ENCODE measurements at regions of chr14 and their contacts with region 1.

Region 1: GRCh38 chr14:36941783-36942521 is 230.5 kb downstream of the SLC25A21 start:
- DNase-seq: peak; percentile 47 to 72
- H3K4me3 ChIP-seq: no peak overlapping the region
- H3K27ac ChIP-seq: no peak overlapping the region
- H3K4me1 ChIP-seq: peaks cover 12% of the 10 kb centered on the region
- H3K27me3 ChIP-seq: no peaks in the 10 kb centered on the region
- CTCF ChIP-seq: peak; percentile 92

Region 2: GRCh38 chr14:36553656-36554260 is 388.2 kb before region 1 on chr14:
- CTCF ChIA-PET with region 1: interaction called, 14 read pairs
- POLR2A ChIA-PET with region 1: no interaction called
- intact Hi-C with region 1: loop called (anchors 5 kb)
- DNase-seq: peak; percentile 18 to 36
- H3K4me3 ChIP-seq: no peak overlapping the region
- H3K27ac ChIP-seq: no peak overlapping the region
- H3K4me1 ChIP-seq: no peaks in the 10 kb centered on the region
- H3K27me3 ChIP-seq: no peaks in the 10 kb centered on the region
- CTCF ChIP-seq: peak; percentile 65

Region 3: GRCh38 chr14:36647824-36648753 is 293.9 kb before region 1 on chr14:
- CTCF ChIA-PET with region 1: interaction called, 20 read pairs
- POLR2A ChIA-PET with region 1: no interaction called
- intact Hi-C with region 1: loop called (anchors 1 kb)
- DNase-seq: peak in 1 of 2 experiments; percentile 55
- H3K4me3 ChIP-seq: peak overlapping the region; percentile 31; the same call in 1 of the 2 replicates
- H3K27ac ChIP-seq: no peak overlapping the region
- H3K4me1 ChIP-seq: no peaks in the 10 kb centered on the region
- H3K27me3 ChIP-seq: no peaks in the 10 kb centered on the region
- CTCF ChIP-seq: peak; percentile 51; the same call in 1 of the 2 replicates

Region 4: DNA sequence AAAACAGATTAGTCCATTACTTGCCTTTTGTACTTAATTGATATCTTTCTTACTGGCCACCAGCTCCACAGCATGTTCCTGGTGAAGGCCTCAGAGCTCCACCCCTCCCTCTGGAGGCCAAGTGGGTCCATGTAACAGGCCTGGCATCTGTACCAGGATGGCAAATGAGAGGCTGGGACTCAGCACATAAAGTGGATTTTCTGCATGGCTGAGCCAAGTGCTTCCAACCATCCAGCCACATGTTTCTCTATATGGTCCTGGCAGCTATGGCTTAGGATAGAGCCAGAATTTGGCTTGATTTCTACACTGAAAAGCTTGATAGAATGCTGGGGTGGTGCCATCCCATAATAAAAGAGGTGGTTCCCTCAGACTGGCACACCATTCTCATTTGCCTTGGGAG is 186.2 kb before region 1 on chr14:
- CTCF ChIA-PET with region 1: no interaction called
- POLR2A ChIA-PET with region 1: no interaction called
- intact Hi-C with region 1: loop called (anchors 5 kb)
- DNase-seq: no peak
- H3K4me3 ChIP-seq: no peak overlapping the region
- H3K27ac ChIP-seq: no peak overlapping the region
- H3K4me1 ChIP-seq: peaks cover 33% of the 10 kb centered on the region
- H3K27me3 ChIP-seq: no peaks in the 10 kb centered on the region
- CTCF ChIP-seq: no peak

Region 5: GRCh38 chr14:36975835-36976234 is 33.9 kb after region 1 on chr14:
- CTCF ChIA-PET with region 1: interaction called, 3 read pairs
- POLR2A ChIA-PET with region 1: no interaction called
- intact Hi-C with region 1: loop called (anchors 2 kb)
- DNase-seq: no peak
- H3K4me3 ChIP-seq: no peak overlapping the region
- H3K27ac ChIP-seq: peak overlapping the region; percentile 90
- H3K4me1 ChIP-seq: peaks cover 40% of the 10 kb centered on the region
- H3K27me3 ChIP-seq: no peaks in the 10 kb centered on the region
- CTCF ChIP-seq: no peak

Region 6: GRCh38 chr14:37116933-37117849 is 175.2 kb after region 1 on chr14:
- CTCF ChIA-PET with region 1: no interaction called
- POLR2A ChIA-PET with region 1: no interaction called
- intact Hi-C with region 1: loop called (anchors 1 kb)
- DNase-seq: peak in 1 of 2 experiments; percentile 76
- H3K4me3 ChIP-seq: no peak overlapping the region
- H3K27ac ChIP-seq: peak overlapping the region; percentile 85
- H3K4me1 ChIP-seq: peaks cover 22% of the 10 kb centered on the region
- H3K27me3 ChIP-seq: no peaks in the 10 kb centered on the region
- CTCF ChIP-seq: peak; percentile 50

Measured in PC-9 (cell line).